MCF 10A (cell line): ENCODE measurements at regions of chr4 and their contacts with region 1.

Region 1: GRCh38 chr4:183074296-183074990 is 24.6 kb upstream of the WWC2 start:
- DNase-seq: no peak
- H3K4me3 Mint-ChIP-seq: no peak overlapping the region
- H3K27ac Mint-ChIP-seq: no peak overlapping the region
- H3K4me1 Mint-ChIP-seq: no peaks in the 10 kb centered on the region
- H3K27me3 Mint-ChIP-seq: no peaks in the 10 kb centered on the region
- CTCF ChIP-seq: no peak

Region 2: GRCh38 chr4:182826391-182826790 is 248.1 kb before region 1 on chr4:
- CTCF ChIA-PET with region 1: no interaction called
- POLR2A ChIA-PET with region 1: no interaction called
- intact Hi-C with region 1: no loop called
- DNase-seq: no peak
- H3K4me3 Mint-ChIP-seq: no peak overlapping the region
- H3K27ac Mint-ChIP-seq: no peak overlapping the region
- H3K4me1 Mint-ChIP-seq: no peaks in the 10 kb centered on the region
- H3K27me3 Mint-ChIP-seq: peaks cover 18% of the 10 kb centered on the region
- CTCF ChIP-seq: no peak

Region 3: GRCh38 chr4:183098723-183099536 is 24.5 kb after region 1 on chr4 and contains the start of gene WWC2:
- CTCF ChIA-PET with region 1: interaction called, 44 read pairs
- POLR2A ChIA-PET with region 1: interaction called, 3 read pairs
- intact Hi-C with region 1: loop called (anchors 1 kb)
- DNase-seq: peak; percentile 92
- H3K4me3 Mint-ChIP-seq: peak within 1 kb of the TSS; percentile 78
- H3K27ac Mint-ChIP-seq: peak within 1 kb of the TSS; percentile 76
- H3K4me1 Mint-ChIP-seq: peaks cover 17% of the 10 kb centered on the region
- H3K27me3 Mint-ChIP-seq: no peaks in the 10 kb centered on the region
- CTCF ChIP-seq: no peak
- total RNA-seq, gene WWC2: 38.6 and 42.4 TPM in 2 replicates

Region 4: GRCh38 chr4:183241322-183241640 is 166.8 kb after region 1 on chr4:
- CTCF ChIA-PET with region 1: interaction called, 28 read pairs
- POLR2A ChIA-PET with region 1: interaction called, 3 read pairs
- intact Hi-C with region 1: no loop called
- DNase-seq: peak; percentile 22
- H3K4me3 Mint-ChIP-seq: no peak overlapping the region
- H3K27ac Mint-ChIP-seq: no peak overlapping the region
- H3K4me1 Mint-ChIP-seq: peaks cover 8% of the 10 kb centered on the region
- H3K27me3 Mint-ChIP-seq: no peaks in the 10 kb centered on the region
- CTCF ChIP-seq: no peak

Region 5: DNA sequence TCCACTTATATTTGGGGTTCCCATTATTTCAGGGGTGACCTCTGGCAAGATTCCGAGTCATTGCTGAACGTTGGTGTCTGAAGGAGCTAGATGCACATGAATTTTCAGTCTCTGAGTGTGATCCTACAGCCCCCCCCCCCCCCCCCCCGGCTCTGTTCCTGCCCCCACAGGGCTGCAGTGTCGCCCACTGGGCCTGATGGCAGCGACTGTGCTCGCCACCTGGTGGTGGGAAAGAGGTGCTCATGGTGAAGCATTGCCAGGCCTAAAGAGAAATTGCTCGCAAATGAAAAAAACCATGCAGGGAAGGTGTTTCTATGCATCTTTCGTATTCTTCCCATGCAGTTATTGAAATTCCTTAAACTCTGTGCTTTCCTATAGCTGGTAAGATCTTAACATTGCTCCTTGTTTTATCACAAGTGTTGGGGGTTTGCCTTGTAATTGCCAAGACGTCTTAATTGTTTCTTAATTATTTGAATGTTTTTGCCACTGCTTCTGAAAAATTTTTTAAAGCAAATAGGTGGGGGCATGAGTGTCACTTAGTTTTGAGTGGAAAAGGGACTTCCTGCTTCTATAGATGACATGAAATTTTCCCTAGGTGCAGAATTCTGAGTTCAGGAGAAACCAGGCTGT is 182.4 kb after region 1 on chr4:
- CTCF ChIA-PET with region 1: interaction called, 226 read pairs
- POLR2A ChIA-PET with region 1: interaction called, 3 read pairs
- intact Hi-C with region 1: loop called (anchors 1 kb)
- DNase-seq: peak; percentile 52
- H3K4me3 Mint-ChIP-seq: no peak overlapping the region
- H3K27ac Mint-ChIP-seq: no peak overlapping the region
- H3K4me1 Mint-ChIP-seq: no peaks in the 10 kb centered on the region
- H3K27me3 Mint-ChIP-seq: no peaks in the 10 kb centered on the region
- CTCF ChIP-seq: peak; percentile 73

Region 6: GRCh38 chr4:183398227-183399125 is 324.0 kb after region 1 on chr4:
- CTCF ChIA-PET with region 1: no interaction called
- POLR2A ChIA-PET with region 1: no interaction called
- intact Hi-C with region 1: loop called (anchors 2 kb)
- DNase-seq: peak; percentile 56
- H3K4me3 Mint-ChIP-seq: peak overlapping the region; percentile 74
- H3K27ac Mint-ChIP-seq: peak overlapping the region; percentile 80
- H3K4me1 Mint-ChIP-seq: peaks cover 10% of the 10 kb centered on the region
- H3K27me3 Mint-ChIP-seq: no peaks in the 10 kb centered on the region
- CTCF ChIP-seq: peak; percentile 49